HepG2 (cell line): ENCODE measurements at regions of chr6 and their contacts with region 1.

Region 1: GRCh38 chr6:46862381-46862780 is 59.4 kb downstream of the ADGRF5 start:
- DNase-seq: no peak
- ATAC-seq: no peak
- H3K4me3 ChIP-seq: no peak overlapping the region
- H3K27ac ChIP-seq: no peak overlapping the region
- H3K4me1 ChIP-seq: no peaks in the 10 kb centered on the region
- H3K27me3 ChIP-seq: peaks cover 0 to 10% of the 10 kb centered on the region in 2 experiments; a peak in 2 of 5 replicates
- CTCF ChIP-seq: no peak
- EP300 ChIP-seq: no peak
- POLR2A ChIP-seq: no peak
- RAD21 ChIP-seq: no peak

Region 2: GRCh38 chr6:45830441-45831139 is 1031.8 kb before region 1 on chr6:
- CTCF ChIA-PET with region 1: no interaction called
- POLR2A ChIA-PET with region 1: no interaction called
- in situ Hi-C with region 1: no loop called
- intact Hi-C with region 1: no loop called
- DNase-seq: no peak
- ATAC-seq: no peak
- H3K4me3 ChIP-seq: no peak overlapping the region
- H3K27ac ChIP-seq: no peak overlapping the region
- H3K4me1 ChIP-seq: no peaks in the 10 kb centered on the region
- H3K27me3 ChIP-seq: no peaks in the 10 kb centered on the region; a peak in 1 of 5 replicates
- CTCF ChIP-seq: no peak
- EP300 ChIP-seq: no peak
- POLR2A ChIP-seq: no peak
- RAD21 ChIP-seq: no peak

Region 3: DNA sequence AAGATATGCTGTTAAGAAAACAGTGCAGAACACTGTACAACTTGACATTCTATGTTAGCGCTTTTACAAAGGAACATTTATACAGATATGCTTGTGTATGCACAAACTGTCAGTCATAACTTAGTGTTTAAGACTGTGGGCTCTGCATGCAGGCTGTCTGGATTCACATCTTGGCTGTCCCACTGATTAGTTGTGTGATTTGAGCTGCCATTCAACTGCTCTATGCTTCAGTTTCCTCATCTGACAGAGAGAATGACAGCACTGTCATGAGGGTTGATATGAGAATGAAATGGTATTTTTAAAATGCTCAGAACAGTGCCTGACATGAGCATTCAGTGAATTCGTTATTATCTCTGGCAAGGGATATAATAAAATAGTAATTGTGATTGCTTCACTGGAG is 200.9 kb before region 1 on chr6:
- CTCF ChIA-PET with region 1: no interaction called
- POLR2A ChIA-PET with region 1: no interaction called
- in situ Hi-C with region 1: no loop called
- intact Hi-C with region 1: no loop called
- DNase-seq: no peak
- ATAC-seq: no peak
- H3K4me3 ChIP-seq: no peak overlapping the region
- H3K27ac ChIP-seq: no peak overlapping the region
- H3K4me1 ChIP-seq: no peaks in the 10 kb centered on the region
- H3K27me3 ChIP-seq: no peaks in the 10 kb centered on the region; a peak in 1 of 5 replicates
- CTCF ChIP-seq: no peak
- EP300 ChIP-seq: no peak
- POLR2A ChIP-seq: no peak
- RAD21 ChIP-seq: no peak

Region 4: DNA sequence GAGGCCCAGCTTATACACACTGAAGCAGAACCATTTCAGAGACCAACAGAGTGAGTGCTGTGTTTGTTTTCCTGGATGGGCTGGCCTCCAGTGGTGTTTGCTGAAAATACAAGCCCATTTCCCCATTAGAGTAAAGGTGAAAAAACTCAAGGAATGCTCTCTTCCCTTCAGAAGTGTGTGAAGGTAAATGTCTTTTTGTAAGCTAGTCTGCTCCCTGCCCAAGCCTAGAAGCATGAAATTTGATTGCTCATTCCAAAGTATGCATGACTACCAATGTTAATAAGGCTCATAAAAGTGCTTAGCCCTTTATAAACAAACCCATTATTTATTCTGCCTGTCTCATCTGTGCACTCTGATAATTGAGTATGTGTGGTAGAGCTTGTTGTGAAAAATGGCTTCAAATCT is 120.6 kb after region 1 on chr6:
- CTCF ChIA-PET with region 1: no interaction called
- POLR2A ChIA-PET with region 1: no interaction called
- in situ Hi-C with region 1: loop called (anchors 25 kb)
- intact Hi-C with region 1: no loop called
- DNase-seq: no peak
- ATAC-seq: peak; percentile 58
- H3K4me3 ChIP-seq: no peak overlapping the region
- H3K27ac ChIP-seq: no peak overlapping the region
- H3K4me1 ChIP-seq: peaks cover 9% of the 10 kb centered on the region; the same call in 1 of the 2 replicates
- H3K27me3 ChIP-seq: no peaks in the 10 kb centered on the region
- CTCF ChIP-seq: no peak
- EP300 ChIP-seq: no peak
- POLR2A ChIP-seq: no peak
- RAD21 ChIP-seq: no peak